ENCODE measurements at regions of chr17 and their contacts with region 1.

Region 1: DNA sequence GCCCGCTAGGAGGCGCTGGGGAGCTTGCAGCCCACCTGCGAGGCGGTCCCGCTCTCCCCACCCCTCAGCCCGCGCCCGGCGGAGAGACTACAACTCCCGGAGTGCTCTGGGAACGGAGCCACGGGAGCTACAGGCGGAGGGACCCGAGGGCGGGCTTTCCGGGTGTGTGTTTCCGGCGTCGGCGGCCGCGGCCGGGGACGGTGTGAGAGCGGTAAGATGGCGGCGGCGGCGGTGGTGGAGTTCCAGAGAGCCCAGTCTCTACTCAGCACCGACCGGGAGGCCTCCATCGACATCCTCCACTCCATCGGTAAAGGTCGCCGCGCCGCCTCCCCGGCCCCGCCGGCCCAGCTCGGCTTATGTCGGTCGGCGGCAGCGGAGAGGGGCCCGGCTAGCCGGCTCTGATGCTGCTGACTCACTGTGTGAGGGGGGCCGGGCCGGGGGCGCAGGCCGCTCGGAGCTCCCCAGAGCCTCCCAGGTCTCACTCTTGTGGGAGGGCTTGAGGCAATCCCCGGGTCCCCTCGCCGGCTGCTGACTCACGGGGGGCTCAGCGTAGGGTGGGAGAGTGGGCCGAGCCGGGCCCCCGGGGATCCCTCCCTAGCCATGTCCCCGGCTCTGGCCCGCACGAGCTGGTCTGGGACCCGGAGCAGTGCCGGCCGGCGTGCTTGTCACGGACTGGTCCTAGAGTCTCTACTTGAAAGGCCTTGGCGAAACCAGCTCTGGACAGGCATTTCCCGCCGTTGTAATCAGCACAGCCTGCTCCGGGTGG is at the start of gene PSMD11:
- H3K4me3 ChIP-seq: peak within 1 kb of the TSS; percentile 94
- H3K27ac ChIP-seq: peak within 1 kb of the TSS; percentile 92
- H3K4me1 ChIP-seq: peaks cover 9% of the 10 kb centered on the region
- CTCF ChIP-seq: peak; percentile 97

Region 2: DNA sequence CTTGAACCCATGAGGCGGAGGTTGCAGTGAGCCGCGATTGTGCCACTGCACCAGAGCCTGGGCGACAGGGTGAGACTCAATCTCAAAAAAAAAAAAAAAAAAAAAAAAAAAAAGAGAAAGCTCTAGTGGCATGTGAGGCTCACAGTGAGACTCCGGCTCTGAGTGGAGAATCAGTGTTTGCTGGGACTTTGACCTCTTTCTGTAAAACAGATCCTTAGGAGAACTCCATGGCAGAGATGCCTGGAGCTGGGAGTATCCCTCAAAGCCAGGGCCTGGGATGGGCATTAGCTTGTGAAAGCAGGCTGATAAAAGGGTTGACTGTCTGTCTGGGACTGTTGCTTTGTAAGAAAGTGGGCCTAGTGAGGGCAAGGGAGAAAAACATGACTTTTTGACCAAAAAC is 48.1 kb before region 1 on chr17:
- CTCF ChIA-PET with region 1: interaction called, 16 read pairs
- POLR2A ChIA-PET with region 1: no interaction called
- H3K4me3 ChIP-seq: no peak overlapping the region
- H3K27ac ChIP-seq: no peak overlapping the region
- H3K4me1 ChIP-seq: no peaks in the 10 kb centered on the region
- CTCF ChIP-seq: no peak

Region 3: GRCh38 chr17:32429598-32429997 is 14.9 kb before region 1 on chr17:
- CTCF ChIA-PET with region 1: interaction called, 21 read pairs
- POLR2A ChIA-PET with region 1: interaction called, 3 read pairs
- H3K4me3 ChIP-seq: no peak overlapping the region
- H3K27ac ChIP-seq: no peak overlapping the region
- H3K4me1 ChIP-seq: no peaks in the 10 kb centered on the region
- CTCF ChIP-seq: no peak

Region 4: GRCh38 chr17:32551186-32551955 is 106.9 kb after region 1 on chr17:
- CTCF ChIA-PET with region 1: no interaction called
- POLR2A ChIA-PET with region 1: no interaction called
- H3K4me3 ChIP-seq: no peak overlapping the region
- H3K27ac ChIP-seq: no peak overlapping the region
- H3K4me1 ChIP-seq: no peaks in the 10 kb centered on the region
- CTCF ChIP-seq: no peak

Measured in HEK293 (cell line).